Motor neuron (in vitro differentiated cells): ENCODE measurements at regions of chr10 and their contacts with region 1.

Region 1: GRCh38 chr10:52729271-52730104 is 43.1 kb downstream of the MBL2 start:
- ATAC-seq: peak in 4 of 8 experiments; percentile 57 to 88 (median 86)
- H3K4me3 ChIP-seq: no peak overlapping the region
- H3K27ac ChIP-seq: no peak overlapping the region
- H3K4me1 ChIP-seq: no peaks in the 10 kb centered on the region

Region 2: DNA sequence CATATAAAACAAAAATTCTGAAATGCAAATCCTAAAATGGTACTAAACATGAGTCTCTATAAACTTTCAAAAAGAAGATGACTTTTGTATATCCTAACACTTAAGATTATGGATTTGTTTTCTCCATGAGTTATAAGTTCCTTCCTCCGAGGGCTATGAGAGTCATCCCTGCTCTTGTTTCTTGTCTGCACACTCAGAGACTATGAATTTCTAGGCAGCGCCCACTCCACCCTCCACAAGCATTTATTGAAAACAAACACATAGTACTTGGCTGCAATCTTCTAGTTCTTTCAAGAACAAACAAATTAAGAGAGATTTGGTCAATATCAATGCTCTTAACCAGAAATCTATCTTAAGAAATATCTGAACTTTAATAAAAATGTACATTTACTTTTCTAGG is 203.7 kb before region 1 on chr10:
- in situ Hi-C with region 1: no loop called
- ATAC-seq: peak in 3 of 8 experiments; percentile 35 to 100 (median 99)
- H3K4me3 ChIP-seq: no peak overlapping the region
- H3K27ac ChIP-seq: no peak overlapping the region
- H3K4me1 ChIP-seq: no peaks in the 10 kb centered on the region

Region 3: DNA sequence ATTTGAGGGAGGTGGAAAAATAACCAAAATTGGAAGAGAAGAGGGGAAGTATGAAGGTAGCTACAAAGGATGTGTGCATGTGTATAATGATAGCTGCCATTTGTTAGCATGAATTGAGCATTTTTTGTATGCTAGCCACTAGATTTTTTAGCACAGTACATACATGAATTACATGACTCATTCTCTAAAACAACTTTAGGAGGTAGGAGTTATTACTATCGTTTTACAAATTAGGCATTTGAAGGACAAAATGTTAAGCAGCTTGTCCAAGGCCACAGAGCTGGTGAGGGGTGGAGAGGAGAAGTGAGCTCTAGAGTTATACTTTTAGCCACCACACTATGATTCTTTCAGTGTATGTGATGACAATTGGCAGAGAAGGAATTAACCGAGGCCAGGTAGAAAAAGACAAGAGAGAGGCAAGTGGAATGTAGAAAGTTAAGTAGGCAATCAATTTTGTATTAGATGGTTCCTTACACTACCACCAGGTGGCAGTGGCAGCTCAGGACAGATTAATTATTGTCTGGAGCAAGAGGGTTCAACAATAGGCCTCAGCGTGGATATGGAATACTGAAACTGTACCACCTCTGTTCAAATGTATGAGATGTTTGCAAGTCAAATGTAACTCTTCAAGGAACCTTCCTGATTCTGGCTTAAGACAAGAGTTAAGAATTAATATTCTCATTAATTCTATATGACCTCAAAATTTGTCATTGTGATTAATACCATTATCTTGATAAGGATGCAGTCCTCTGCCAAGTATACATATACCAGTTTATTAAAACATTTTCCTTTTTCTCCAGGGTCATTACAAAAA is 84.9 kb before region 1 on chr10:
- in situ Hi-C with region 1: loop called in 1 of 9 experiments (anchors 5 kb)
- ATAC-seq: peak in 3 of 8 experiments; percentile 76 to 89 (median 89)
- H3K4me3 ChIP-seq: no peak overlapping the region
- H3K27ac ChIP-seq: no peak overlapping the region
- H3K4me1 ChIP-seq: no peaks in the 10 kb centered on the region